ENCODE measurements at regions of chr13 and their contacts with region 1.

Region 1: GRCh38 chr13:49936085-49936940 is at the start of gene SPRYD7:
- DNase-seq: peak; percentile 50 to 98
- ATAC-seq: peak; percentile 97
- H3K4me3 ChIP-seq: peak within 1 kb of the TSS; percentile 80
- H3K27ac ChIP-seq: peak within 1 kb of the TSS; percentile 96 to 97
- H3K4me1 ChIP-seq: peaks cover 28% of the 10 kb centered on the region
- CTCF ChIP-seq: peak; percentile 66
- EP300 ChIP-seq: no peak
- POLR2A ChIP-seq: peak; percentile 51; the same call in 1 of the 2 replicates
- RAD21 ChIP-seq: peak; percentile 45 to 63
- polyA plus RNA-seq, gene SPRYD7: 9.0 and 11.6 TPM in 2 replicates

Region 2: GRCh38 chr13:49792550-49793324 is 143.6 kb before region 1 on chr13 and contains the start of gene KPNA3:
- CTCF ChIA-PET with region 1: interaction called, 8 read pairs
- POLR2A ChIA-PET with region 1: interaction called, 13 read pairs
- DNase-seq: peak; percentile 73 to 93
- ATAC-seq: peak; percentile 91 to 98
- H3K4me3 ChIP-seq: peak within 1 kb of the TSS; percentile 98
- H3K27ac ChIP-seq: peak within 1 kb of the TSS; percentile 97 to 99
- H3K4me1 ChIP-seq: peaks cover 30% of the 10 kb centered on the region
- CTCF ChIP-seq: peak; percentile 29; the same call in 1 of the 3 replicates
- EP300 ChIP-seq: no peak
- POLR2A ChIP-seq: peak; percentile 71
- RAD21 ChIP-seq: peak in 1 of 2 experiments; percentile 53; a peak in 3 of 5 replicates
- polyA plus RNA-seq, gene KPNA3: 28.5 and 31.4 TPM in 2 replicates

Region 3: GRCh38 chr13:49858183-49858856 is 78.0 kb before region 1 on chr13:
- CTCF ChIA-PET with region 1: interaction called, 9 read pairs
- POLR2A ChIA-PET with region 1: interaction called, 17 read pairs
- DNase-seq: peak; percentile 67 to 93
- ATAC-seq: peak; percentile 93 to 99
- H3K4me3 ChIP-seq: peak overlapping the region; percentile 32
- H3K27ac ChIP-seq: peak overlapping the region; percentile 96 to 99
- H3K4me1 ChIP-seq: peaks cover 34% of the 10 kb centered on the region
- CTCF ChIP-seq: no peak
- EP300 ChIP-seq: peak; percentile 68 to 73; a peak in 4 of 5 replicates
- POLR2A ChIP-seq: no peak
- RAD21 ChIP-seq: peak; percentile 12 to 29; a peak in 1 of 5 replicates

Region 4: GRCh38 chr13:49922301-49922700 is 14.0 kb before region 1 on chr13:
- CTCF ChIA-PET with region 1: interaction called, 14 read pairs
- POLR2A ChIA-PET with region 1: no interaction called
- DNase-seq: no peak
- ATAC-seq: no peak
- H3K4me3 ChIP-seq: no peak overlapping the region
- H3K27ac ChIP-seq: no peak overlapping the region
- H3K4me1 ChIP-seq: no peaks in the 10 kb centered on the region
- CTCF ChIP-seq: no peak
- EP300 ChIP-seq: no peak
- POLR2A ChIP-seq: no peak
- RAD21 ChIP-seq: no peak

Measured in A549 (cell line).